IMR-90 (cell line): ENCODE measurements at regions of chr7 and their contacts with region 1.

Region 1: GRCh38 chr7:84379446-84379845 is 184.9 kb upstream of the SEMA3A start:
- DNase-seq: no peak
- ATAC-seq: no peak
- H3K4me3 ChIP-seq: no peak overlapping the region
- H3K27ac ChIP-seq: no peak overlapping the region
- H3K4me1 ChIP-seq: no peaks in the 10 kb centered on the region
- H3K27me3 ChIP-seq: no peaks in the 10 kb centered on the region
- CTCF ChIP-seq: no peak
- POLR2A ChIP-seq: no peak
- RAD21 ChIP-seq: no peak

Region 2: DNA sequence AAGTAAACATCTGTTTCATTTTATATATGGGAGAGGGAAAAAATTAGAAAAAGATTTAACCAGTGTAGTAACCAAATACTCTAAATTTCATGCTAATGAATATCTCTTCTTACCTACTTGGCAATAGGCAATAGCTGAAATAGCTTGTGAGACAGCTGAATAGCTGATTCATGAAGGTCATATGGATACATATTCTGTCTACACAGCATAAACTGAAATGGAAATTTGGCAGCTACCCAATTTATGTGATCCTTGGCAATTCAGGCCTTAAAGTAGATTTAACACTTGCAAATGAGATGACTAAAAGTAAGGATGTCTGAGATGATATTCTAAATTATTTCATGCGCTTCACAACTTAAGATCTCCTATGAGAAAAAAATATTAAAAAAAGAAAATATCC is 76.3 kb after region 1 on chr7:
- CTCF ChIA-PET with region 1: no interaction called
- POLR2A ChIA-PET with region 1: no interaction called
- dilution Hi-C with region 1: no loop called
- in situ Hi-C with region 1: no loop called
- intact Hi-C with region 1: loop called (anchors 1 kb)
- DNase-seq: peak; percentile 30
- ATAC-seq: no peak
- H3K4me3 ChIP-seq: no peak overlapping the region
- H3K27ac ChIP-seq: no peak overlapping the region
- H3K4me1 ChIP-seq: no peaks in the 10 kb centered on the region
- H3K27me3 ChIP-seq: no peaks in the 10 kb centered on the region
- CTCF ChIP-seq: no peak
- POLR2A ChIP-seq: no peak
- RAD21 ChIP-seq: no peak

Region 3: GRCh38 chr7:84492098-84493034 is 112.9 kb after region 1 on chr7:
- CTCF ChIA-PET with region 1: no interaction called
- POLR2A ChIA-PET with region 1: no interaction called
- dilution Hi-C with region 1: no loop called
- in situ Hi-C with region 1: no loop called
- intact Hi-C with region 1: no loop called
- DNase-seq: no peak
- ATAC-seq: no peak
- H3K4me3 ChIP-seq: no peak overlapping the region
- H3K27ac ChIP-seq: no peak overlapping the region
- H3K4me1 ChIP-seq: no peaks in the 10 kb centered on the region
- H3K27me3 ChIP-seq: no peaks in the 10 kb centered on the region
- CTCF ChIP-seq: no peak
- POLR2A ChIP-seq: no peak
- RAD21 ChIP-seq: no peak